Body of pancreas (tissue), 4 donors: ENCODE measurements at regions of chr19 and their contacts with region 1.

Region 1: GRCh38 chr19:7852851-7853769 is 21.1 kb downstream of the PRR36 start:
- DNase-seq: peak; percentile 95 to 97 (median 97)
- ATAC-seq: peak; percentile 99
- H3K4me3 ChIP-seq: no peak overlapping the region
- H3K27ac ChIP-seq: peak overlapping the region; percentile 62 to 90 (median 77)
- H3K4me1 ChIP-seq: peaks cover 13% of the 10 kb centered on the region
- H3K27me3 ChIP-seq: no peaks in the 10 kb centered on the region
- CTCF ChIP-seq: peak; percentile 86 to 97 (median 92)
- POLR2A ChIP-seq: peak in 2 of 3 donors; percentile 47 to 49

Region 2: DNA sequence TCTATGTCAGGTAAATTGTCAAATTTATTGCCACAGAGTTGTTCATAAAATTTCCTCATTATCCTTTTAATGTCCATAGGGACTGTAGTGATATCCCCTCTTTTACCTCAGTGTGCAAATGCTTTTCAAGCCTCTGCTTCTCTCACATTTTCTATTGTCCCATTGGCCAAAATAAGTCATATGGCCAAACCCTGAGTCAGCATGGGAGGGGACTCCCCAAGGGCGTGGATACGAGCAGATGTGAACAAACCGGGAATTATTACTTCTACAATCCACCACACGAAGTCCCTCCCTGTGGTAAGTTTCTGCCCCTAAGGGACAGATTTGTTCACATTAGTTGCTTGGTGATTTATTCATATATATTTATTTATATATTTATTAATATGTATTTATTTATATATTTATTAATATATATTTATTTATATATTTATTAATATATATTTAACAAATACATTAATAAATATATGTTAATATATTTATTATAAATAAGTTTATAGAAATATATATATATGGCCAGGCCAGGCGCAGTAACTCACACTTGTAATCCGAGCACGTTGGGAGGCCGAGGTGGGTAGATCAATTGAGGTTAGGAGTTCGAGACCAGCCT is 277.6 kb before region 1 on chr19:
- intact Hi-C with region 1: no loop called
- DNase-seq: peak in 1 of 4 donors; percentile 13
- ATAC-seq: no peak
- H3K4me3 ChIP-seq: no peak overlapping the region
- H3K27ac ChIP-seq: no peak overlapping the region
- H3K4me1 ChIP-seq: no peaks in the 10 kb centered on the region
- H3K27me3 ChIP-seq: no peaks in the 10 kb centered on the region
- CTCF ChIP-seq: no peak
- POLR2A ChIP-seq: no peak

Region 3: DNA sequence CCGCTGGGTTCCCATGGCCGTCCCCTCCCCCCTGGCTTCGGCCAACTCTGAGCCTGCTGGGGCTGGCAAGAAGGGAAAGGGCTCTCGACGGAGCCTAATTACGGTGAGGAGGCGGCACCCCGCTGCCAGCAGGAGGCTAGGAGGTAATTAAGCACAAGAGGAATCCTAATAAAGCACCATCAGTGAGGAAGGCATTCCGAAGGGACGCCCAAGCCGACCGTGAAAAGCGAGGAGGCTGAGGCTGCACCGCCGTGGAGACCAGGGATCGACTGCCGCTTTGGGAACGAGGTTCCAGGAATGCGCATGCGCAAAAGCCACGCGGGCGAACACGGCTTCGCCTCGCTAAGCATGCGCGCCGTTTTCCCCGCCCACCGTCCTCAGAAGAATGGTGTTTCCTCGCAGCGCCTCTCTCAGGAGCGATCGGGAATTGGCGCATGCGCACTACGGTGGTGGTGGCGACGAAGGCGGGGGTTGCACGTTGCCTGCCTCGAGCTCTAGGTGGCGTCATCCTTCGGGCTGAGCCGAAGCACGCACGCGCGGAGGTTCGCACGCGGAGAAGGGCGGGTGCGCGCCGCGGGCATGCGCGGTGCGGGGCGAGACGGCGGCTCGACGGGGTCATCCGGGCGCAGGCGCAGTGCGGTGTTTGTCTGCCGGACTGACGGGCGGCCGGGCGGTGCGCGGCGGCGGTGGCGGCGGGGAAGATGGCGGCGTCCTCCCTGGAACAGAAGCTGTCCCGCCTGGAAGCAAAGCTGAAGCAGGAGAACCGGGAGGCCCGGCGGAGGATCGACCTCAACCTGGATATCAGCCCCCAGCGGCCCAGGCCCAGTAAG is 50.3 kb after region 1 on chr19 and contains the start of gene MAP2K7:
- intact Hi-C with region 1: loop called (anchors 10 kb)
- DNase-seq: peak; percentile 99 to 100 (median 100)
- ATAC-seq: peak; percentile 92
- H3K4me3 ChIP-seq: peak within 1 kb of the TSS; percentile 57 to 88
- H3K27ac ChIP-seq: peak within 1 kb of the TSS; percentile 86 to 91 (median 89)
- H3K4me1 ChIP-seq: peaks cover 53% of the 10 kb centered on the region
- H3K27me3 ChIP-seq: no peaks in the 10 kb centered on the region
- CTCF ChIP-seq: peak; percentile 11 to 84 (median 46)
- POLR2A ChIP-seq: peak; percentile 60 to 91 (median 90)
- total RNA-seq, gene MAP2K7: 8.0 to 34.9 TPM

Region 4: GRCh38 chr19:7919610-7920518 is 66.8 kb after region 1 on chr19 and contains the start of gene SNAPC2:
- intact Hi-C with region 1: no loop called
- DNase-seq: peak; percentile 98
- ATAC-seq: peak; percentile 82
- H3K4me3 ChIP-seq: peak within 1 kb of the TSS; percentile 53 to 67
- H3K27ac ChIP-seq: peak within 1 kb of the TSS; percentile 89 to 97 (median 92)
- H3K4me1 ChIP-seq: peaks cover 56% of the 10 kb centered on the region
- H3K27me3 ChIP-seq: peaks cover 0 to 14% of the 10 kb centered on the region in 2 donors
- CTCF ChIP-seq: peak in 1 of 7 experiments; percentile 20
- POLR2A ChIP-seq: peak in 2 of 3 donors; percentile 39 to 46
- total RNA-seq, gene SNAPC2: 6.3 to 9.1 TPM